Caco-2 (cell line): ENCODE measurements at regions of chr4 and their contacts with region 1.

Region 1: DNA sequence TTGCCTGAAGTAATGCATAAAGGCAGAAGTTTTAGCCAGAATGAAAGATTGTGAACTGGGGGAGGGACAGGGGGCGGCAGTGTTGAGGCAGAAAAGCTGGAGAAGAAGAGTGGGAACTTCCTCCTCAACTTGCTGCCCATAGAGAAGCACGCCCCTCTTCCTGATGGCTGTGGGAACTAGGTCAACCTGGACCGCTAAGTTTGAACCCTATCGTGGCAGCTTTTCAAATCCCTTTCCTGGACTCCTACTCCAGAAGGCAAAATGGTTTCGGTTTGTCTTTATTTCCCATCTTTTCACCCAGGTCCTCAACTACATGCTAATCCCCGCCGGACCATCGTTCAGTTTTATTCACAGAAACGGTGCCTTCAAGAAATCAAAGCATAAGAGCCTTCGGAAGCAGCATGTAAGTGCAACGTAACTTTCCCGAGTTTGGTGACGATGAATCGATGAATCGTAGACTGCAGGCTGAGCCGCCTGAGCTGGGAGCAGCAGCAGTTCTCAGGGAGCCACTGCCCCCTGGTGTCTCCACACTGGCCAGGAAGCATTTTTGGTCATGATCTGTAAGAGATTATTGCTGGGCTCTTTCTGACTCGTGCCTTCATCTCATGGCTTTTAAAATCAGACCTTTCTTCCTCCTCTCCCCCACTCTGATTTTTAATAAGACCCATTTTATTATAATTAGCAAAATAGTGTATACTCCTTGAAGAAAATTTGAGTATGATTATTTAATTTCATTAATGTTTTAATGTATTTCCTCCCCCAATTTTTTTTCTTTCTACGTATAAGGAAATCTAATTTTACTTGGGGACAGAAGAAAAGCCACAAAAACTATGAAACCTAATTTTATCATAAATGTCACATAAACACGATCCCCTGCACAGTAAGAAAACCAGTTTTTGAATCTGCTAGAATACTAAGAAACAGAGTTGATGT is 21.4 kb downstream of the SPINK2 start:
- DNase-seq: peak; percentile 79 to 84
- H3K4me3 ChIP-seq: peak overlapping the region; percentile 43
- H3K4me3 Mint-ChIP-seq: peak overlapping the region; percentile 96
- H3K27ac Mint-ChIP-seq: peak overlapping the region; percentile 79
- H3K4me1 ChIP-seq: no peaks in the 10 kb centered on the region
- H3K4me1 Mint-ChIP-seq: no peaks in the 10 kb centered on the region
- H3K27me3 ChIP-seq: no peaks in the 10 kb centered on the region
- H3K27me3 Mint-ChIP-seq: no peaks in the 10 kb centered on the region
- CTCF ChIP-seq: peak; percentile 89 to 90

Region 2: DNA sequence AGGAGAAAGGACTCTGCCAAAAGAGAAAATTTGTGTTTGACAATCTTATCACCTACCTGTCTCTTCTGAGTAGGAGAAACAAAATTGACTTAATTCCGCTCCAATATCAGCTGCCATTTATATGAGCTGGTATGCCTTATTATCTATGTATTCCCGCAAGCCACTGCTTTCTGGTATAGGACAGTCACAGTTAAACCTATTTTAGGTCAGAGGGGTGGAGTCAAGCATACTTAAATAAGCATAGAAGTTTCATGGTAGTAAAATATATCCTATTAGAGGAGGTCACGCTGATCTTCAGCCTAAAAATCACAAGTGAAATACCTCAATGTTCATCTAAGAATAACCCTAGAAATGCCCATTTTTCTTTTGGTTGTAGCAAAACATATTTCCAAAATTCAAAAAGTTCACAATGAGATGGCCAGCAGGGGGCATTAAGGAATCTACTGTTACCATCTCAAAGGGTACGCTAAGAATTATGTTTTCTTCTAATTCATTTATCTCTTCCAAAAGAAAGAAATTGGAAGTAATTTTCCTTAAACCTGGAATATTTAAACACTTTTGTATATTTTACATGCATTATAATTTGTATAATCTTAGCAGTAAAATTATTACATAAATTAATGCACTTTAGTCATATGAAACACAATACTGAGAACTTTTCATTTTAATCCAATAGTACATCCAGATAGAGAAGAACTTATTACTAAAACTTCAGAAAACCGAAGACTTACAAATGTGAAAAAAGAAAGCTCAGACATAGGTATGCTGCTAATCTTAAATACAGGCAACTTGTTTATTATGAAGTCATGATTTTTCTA is 375.2 kb before region 1 on chr4:
- CTCF ChIA-PET with region 1: no interaction called
- POLR2A ChIA-PET with region 1: no interaction called
- intact Hi-C with region 1: no loop called
- DNase-seq: peak in 1 of 2 experiments; percentile 17
- H3K4me3 ChIP-seq: no peak overlapping the region
- H3K4me3 Mint-ChIP-seq: no peak overlapping the region
- H3K27ac Mint-ChIP-seq: no peak overlapping the region
- H3K4me1 ChIP-seq: no peaks in the 10 kb centered on the region
- H3K4me1 Mint-ChIP-seq: no peaks in the 10 kb centered on the region
- H3K27me3 ChIP-seq: no peaks in the 10 kb centered on the region
- H3K27me3 Mint-ChIP-seq: no peaks in the 10 kb centered on the region
- CTCF ChIP-seq: peak; percentile 40 to 51

Region 3: DNA sequence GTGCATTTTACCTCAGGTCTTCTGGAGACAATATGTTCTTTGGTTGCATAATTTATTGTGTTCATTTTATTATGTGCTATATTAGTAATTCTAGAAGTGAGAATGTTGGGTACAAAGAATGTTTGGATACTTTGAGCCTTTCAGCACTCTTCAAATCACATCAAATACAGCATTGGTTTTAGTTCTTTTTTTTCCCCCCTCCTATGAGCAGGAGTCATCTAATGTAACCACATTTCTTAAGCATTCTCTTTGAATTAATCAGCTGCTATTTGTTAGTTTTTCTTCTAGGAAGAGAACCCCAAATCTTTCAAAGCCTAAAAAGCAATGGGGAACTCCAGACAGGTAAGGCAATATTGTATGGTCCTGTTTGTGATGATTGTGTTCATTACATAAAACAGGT is 247.8 kb before region 1 on chr4:
- CTCF ChIA-PET with region 1: no interaction called
- POLR2A ChIA-PET with region 1: no interaction called
- intact Hi-C with region 1: no loop called
- DNase-seq: no peak
- H3K4me3 ChIP-seq: no peak overlapping the region
- H3K4me3 Mint-ChIP-seq: no peak overlapping the region
- H3K27ac Mint-ChIP-seq: no peak overlapping the region
- H3K4me1 ChIP-seq: no peaks in the 10 kb centered on the region
- H3K4me1 Mint-ChIP-seq: no peaks in the 10 kb centered on the region
- H3K27me3 ChIP-seq: no peaks in the 10 kb centered on the region
- H3K27me3 Mint-ChIP-seq: peaks cover 14% of the 10 kb centered on the region
- CTCF ChIP-seq: no peak

Region 4: DNA sequence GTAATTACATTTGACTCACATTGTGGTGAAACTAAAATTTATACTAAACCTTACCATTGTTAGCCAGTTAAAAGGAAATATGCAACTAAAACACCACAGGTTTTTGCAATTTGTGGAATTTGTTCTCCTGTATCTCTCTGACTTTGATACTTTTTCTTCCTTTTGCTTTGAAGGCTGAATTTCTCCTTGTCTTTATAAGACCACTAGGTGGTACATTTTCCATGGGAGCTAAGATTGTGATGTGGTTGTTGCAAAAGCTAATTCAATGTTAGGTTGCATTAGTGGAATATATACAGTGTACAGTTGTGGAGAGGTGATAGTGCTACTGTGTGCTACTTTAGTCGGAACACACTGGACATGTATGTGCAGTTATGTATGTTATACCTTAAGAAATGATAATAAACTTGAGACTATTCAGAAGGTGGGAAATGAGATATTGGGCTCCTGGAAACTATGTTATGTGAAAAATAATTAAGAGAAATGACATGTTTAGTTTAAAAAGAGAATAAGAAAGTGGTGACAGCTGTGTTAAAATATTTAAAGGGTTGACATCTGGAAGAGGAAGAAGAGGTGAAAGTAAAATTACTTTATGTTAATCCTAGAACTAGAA is 224.2 kb before region 1 on chr4:
- CTCF ChIA-PET with region 1: interaction called, 20 read pairs
- POLR2A ChIA-PET with region 1: no interaction called
- intact Hi-C with region 1: loop called (anchors 1 kb)
- DNase-seq: no peak
- H3K4me3 ChIP-seq: no peak overlapping the region
- H3K4me3 Mint-ChIP-seq: no peak overlapping the region
- H3K27ac Mint-ChIP-seq: no peak overlapping the region
- H3K4me1 ChIP-seq: no peaks in the 10 kb centered on the region
- H3K4me1 Mint-ChIP-seq: no peaks in the 10 kb centered on the region
- H3K27me3 ChIP-seq: no peaks in the 10 kb centered on the region
- H3K27me3 Mint-ChIP-seq: no peaks in the 10 kb centered on the region
- CTCF ChIP-seq: peak; percentile 31 to 46

Region 5: GRCh38 chr4:56681158-56681852 is 118.8 kb before region 1 on chr4 and contains the start of gene HOPX:
- CTCF ChIA-PET with region 1: interaction called, 12 read pairs
- POLR2A ChIA-PET with region 1: no interaction called
- intact Hi-C with region 1: no loop called
- DNase-seq: peak in 1 of 2 experiments; percentile 52
- H3K4me3 ChIP-seq: 0 out of 2 replicates have a peak within 1 kb of the TSS, but pooled peaks have one; percentile 5
- H3K4me3 Mint-ChIP-seq: peak within 1 kb of the TSS; percentile 45
- H3K27ac Mint-ChIP-seq: no peak within 1 kb of the TSS
- H3K4me1 ChIP-seq: peaks cover 10% of the 10 kb centered on the region; the same call in 1 of the 2 replicates
- H3K4me1 Mint-ChIP-seq: peaks cover 25% of the 10 kb centered on the region
- H3K27me3 ChIP-seq: no peaks in the 10 kb centered on the region
- H3K27me3 Mint-ChIP-seq: no peaks in the 10 kb centered on the region
- CTCF ChIP-seq: no peak
- total RNA-seq, gene HOPX: 0.21 TPM in 1 of 2 replicates, not detected in the other

Region 6: DNA sequence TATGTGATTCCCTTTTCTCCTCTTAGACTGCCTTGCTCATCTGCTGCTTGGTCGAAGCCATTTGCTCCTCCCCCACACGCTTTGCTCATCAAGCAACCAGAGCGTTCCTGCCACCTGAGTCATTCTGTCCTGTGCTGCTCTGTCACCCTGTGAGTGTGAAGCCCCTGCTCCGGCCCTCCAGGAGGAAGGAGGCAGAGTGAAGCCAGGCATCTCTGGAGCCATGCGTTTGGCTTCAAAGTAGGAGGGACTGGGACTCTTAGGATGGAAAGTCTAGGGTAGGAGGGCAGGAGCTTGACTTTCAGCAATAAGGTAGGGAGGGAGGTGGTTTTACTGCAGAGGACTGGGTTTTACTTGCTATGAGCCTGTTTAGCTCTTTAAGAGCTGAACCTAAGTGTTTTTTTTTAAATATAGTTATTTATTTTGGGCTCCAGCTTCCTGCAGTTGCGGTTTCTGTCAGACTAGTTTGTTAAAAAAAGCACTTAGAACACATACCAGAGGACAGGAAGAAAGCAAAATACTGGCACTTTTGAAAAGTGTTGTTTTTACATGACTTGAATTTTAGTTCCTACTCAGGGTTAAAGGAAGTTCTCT is 42.2 kb before region 1 on chr4:
- CTCF ChIA-PET with region 1: interaction called, 4 read pairs
- POLR2A ChIA-PET with region 1: no interaction called
- intact Hi-C with region 1: loop called (anchors 1 kb)
- DNase-seq: peak; percentile 77 to 86
- H3K4me3 ChIP-seq: no peak overlapping the region
- H3K4me3 Mint-ChIP-seq: peak overlapping the region; percentile 58
- H3K27ac Mint-ChIP-seq: peak overlapping the region; percentile 88
- H3K4me1 ChIP-seq: peaks cover 24% of the 10 kb centered on the region
- H3K4me1 Mint-ChIP-seq: peaks cover 35% of the 10 kb centered on the region
- H3K27me3 ChIP-seq: no peaks in the 10 kb centered on the region
- H3K27me3 Mint-ChIP-seq: no peaks in the 10 kb centered on the region
- CTCF ChIP-seq: no peak